Cardiac septum (tissue), 1 donor: ENCODE measurements at regions of chr3 and their contacts with region 1.

Region 1: GRCh38 chr3:143775459-143775858 is 72.8 kb downstream of the SLC9A9 start:
- DNase-seq: no peak

Region 2: GRCh38 chr3:143951351-143951971 is 176.0 kb after region 1 on chr3:
- intact Hi-C with region 1: loop called (anchors 5 kb)
- DNase-seq: no peak